ENCODE measurements at regions of chr9 and their contacts with region 1.

Region 1: DNA sequence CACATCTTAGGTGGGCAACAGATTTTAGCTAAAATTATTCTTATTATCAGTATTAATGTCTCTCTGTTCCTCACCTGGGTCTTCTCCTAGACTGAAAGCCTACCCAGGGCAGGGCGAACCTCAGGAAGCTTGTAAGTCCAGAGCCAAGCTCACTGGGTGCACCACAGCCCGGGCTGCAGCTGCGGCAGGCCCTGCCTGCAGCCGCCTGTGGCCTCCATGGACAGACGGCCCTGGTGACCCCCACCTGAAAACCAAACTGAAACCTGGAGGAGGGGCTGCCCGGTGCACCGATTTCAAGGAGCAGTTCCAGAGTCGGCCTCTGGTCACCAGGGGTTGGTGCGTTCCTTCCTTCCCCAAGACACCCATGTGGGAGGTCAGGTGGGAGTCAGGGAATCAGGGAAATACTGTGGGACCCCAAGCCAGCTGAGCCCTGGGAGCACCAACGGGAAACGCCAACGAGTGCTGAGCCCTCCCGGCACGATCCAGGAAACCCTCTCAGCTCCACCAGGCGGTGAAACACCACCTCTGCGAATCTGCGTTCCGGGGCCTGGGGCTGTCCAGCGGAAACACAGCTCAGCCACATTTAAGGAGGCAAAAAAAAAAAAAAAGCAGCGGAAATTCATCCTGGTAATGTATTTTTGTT is 68.6 kb upstream of the PPP1R26 start:
- DNase-seq: peak; percentile 53

Region 2: DNA sequence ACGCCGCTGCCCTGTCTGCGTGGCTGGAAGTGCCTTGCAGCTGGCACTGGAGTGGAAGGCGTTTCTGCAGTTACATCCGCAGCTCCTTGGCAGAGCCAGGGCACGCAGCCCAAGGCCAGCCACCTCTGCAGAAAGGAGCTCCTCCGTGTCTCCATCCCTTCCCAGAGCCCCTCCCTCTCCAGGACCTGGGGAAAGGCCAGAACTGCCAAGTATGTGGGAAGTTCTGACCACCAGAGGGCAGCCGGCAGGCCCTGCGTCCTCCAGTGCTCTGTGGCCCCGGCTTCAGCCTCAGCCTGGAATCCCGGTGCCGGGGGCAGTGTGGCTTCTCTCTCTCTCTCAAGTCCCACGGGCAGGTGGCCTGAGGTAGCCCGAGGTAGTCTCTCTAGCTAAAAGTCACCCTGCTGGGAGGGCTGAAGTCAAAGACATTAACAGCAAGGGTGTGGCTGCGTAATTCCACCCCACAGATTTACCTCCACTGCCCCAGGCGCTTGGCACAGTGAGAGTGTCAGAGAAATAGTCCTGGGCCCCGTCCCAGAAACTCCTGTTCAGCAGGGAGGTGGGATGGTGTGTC is 632.0 kb before region 1 on chr9:
- intact Hi-C with region 1: loop called (anchors 2 kb)
- DNase-seq: no peak

Region 3: GRCh38 chr9:135343837-135344522 is 67.0 kb before region 1 on chr9:
- intact Hi-C with region 1: loop called (anchors 5 kb)
- DNase-seq: no peak

Measured in cardiac septum (tissue), 1 donor.